Spleen (tissue), 13 donors: ENCODE measurements at regions of chr18 and their contacts with region 1.

Region 1: DNA sequence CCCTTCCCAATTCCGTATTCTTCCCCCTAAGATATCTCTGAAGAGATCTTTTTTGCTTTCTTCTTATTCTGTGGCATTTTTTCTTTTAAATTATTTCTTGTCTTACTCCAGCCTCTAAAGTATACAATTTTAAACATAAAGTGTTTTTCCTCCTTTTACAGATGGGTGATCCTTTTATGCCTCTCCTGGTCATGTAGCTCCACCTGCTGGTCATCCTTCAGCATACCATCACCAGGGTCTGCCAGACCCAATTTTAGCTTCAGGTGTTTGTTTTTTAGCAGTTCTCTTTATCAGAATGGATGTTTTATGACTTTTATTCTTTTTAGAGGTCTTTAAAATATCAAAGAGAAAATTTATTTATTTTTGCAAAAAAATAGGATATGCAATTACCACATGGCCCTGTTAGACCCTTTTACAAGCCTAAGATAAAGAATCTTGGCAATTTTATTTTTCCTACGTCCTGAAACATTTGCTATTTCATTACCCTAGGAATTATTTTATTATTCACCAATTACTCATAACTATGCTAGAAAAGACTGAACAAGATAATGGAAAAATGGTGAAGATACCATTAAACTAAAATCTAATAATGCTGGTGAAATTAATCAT is 55.5 kb downstream of the PIGN start:
- DNase-seq: no peak
- H3K4me3 ChIP-seq: no peak overlapping the region
- H3K27ac ChIP-seq: no peak overlapping the region
- H3K4me1 ChIP-seq: no peaks in the 10 kb centered on the region
- H3K27me3 ChIP-seq: no peaks in the 10 kb centered on the region
- CTCF ChIP-seq: peak; percentile 70 to 90 (median 82)
- POLR2A ChIP-seq: no peak

Region 2: GRCh38 chr18:61551586-61551985 is 579.8 kb before region 1 on chr18:
- intact Hi-C with region 1: loop called (anchors 10 kb)
- DNase-seq: no peak
- H3K4me3 ChIP-seq: no peak overlapping the region
- H3K27ac ChIP-seq: no peak overlapping the region
- H3K4me1 ChIP-seq: peaks cover 0 to 2% (median 0%) of the 10 kb centered on the region in 6 donors
- H3K27me3 ChIP-seq: peaks cover 0 to 6% (median 0%) of the 10 kb centered on the region in 7 donors
- CTCF ChIP-seq: peak; percentile 18 to 81 (median 63)
- POLR2A ChIP-seq: no peak

Region 3: GRCh38 chr18:61575419-61575818 is 556.0 kb before region 1 on chr18:
- intact Hi-C with region 1: no loop called
- DNase-seq: no peak
- H3K4me3 ChIP-seq: no peak overlapping the region
- H3K27ac ChIP-seq: no peak overlapping the region
- H3K4me1 ChIP-seq: peaks cover 0 to 12% (median 0%) of the 10 kb centered on the region in 6 donors
- H3K27me3 ChIP-seq: peaks cover 0 to 25% (median 0%) of the 10 kb centered on the region in 7 donors
- CTCF ChIP-seq: no peak
- POLR2A ChIP-seq: no peak

Region 4: GRCh38 chr18:61635901-61636528 is 495.4 kb before region 1 on chr18:
- intact Hi-C with region 1: loop called (anchors 2 kb)
- DNase-seq: no peak
- H3K4me3 ChIP-seq: no peak overlapping the region
- H3K27ac ChIP-seq: no peak overlapping the region
- H3K4me1 ChIP-seq: no peaks in the 10 kb centered on the region
- H3K27me3 ChIP-seq: peaks cover 0 to 5% (median 0%) of the 10 kb centered on the region in 7 donors
- CTCF ChIP-seq: peak in 10 of 11 experiments; percentile 31 to 78 (median 56)
- POLR2A ChIP-seq: no peak